K562 (cell line): ENCODE measurements at regions of chr11 and their contacts with region 1.

Region 1: DNA sequence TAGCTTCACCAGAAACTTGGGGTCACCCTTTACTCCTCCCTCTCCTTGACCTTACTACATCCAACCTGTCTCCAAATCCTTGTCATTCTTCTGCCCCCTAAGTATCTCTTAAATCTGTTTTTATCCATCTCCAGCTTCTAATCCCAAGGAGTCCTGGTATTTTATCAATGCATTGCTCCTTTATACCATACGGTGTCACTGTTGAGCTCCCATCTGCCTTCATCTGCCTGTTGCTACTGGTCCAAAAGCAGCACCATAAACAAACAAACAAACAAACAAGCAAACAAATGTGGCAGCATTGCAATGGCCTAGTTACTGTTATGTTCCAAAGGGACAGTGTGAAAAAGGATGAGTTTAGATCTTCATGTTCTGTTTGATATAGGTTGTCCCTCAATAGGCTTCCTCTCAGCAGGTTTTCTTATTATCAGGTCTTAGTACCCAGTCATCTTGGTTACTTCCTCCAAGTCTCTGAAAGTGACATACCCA is 34.2 kb downstream of the DNHD1 start:
- DNase-seq: peak; percentile 65 to 69 (median 67)
- ATAC-seq: peak; percentile 90
- H3K4me3 ChIP-seq: no peak overlapping the region
- H3K27ac ChIP-seq: no peak overlapping the region
- H3K4me1 ChIP-seq: no peaks in the 10 kb centered on the region; a peak in 1 of 5 replicates
- H3K27me3 ChIP-seq: no peaks in the 10 kb centered on the region
- CTCF ChIP-seq: peak; percentile 77 to 85 (median 80)
- EP300 ChIP-seq: no peak
- POLR2A ChIP-seq: no peak
- RAD21 ChIP-seq: peak; percentile 94 to 96

Region 2: GRCh38 chr11:6568191-6568918 is 37.0 kb after region 1 on chr11:
- CTCF ChIA-PET with region 1: no interaction called
- POLR2A ChIA-PET with region 1: interaction called, 3 read pairs
- in situ Hi-C with region 1: no loop called
- intact Hi-C with region 1: loop called (anchors 2 kb)
- DNase-seq: peak; percentile 83 to 94 (median 89)
- ATAC-seq: peak; percentile 88
- H3K4me3 ChIP-seq: no peak overlapping the region
- H3K27ac ChIP-seq: peak overlapping the region; percentile 61
- H3K4me1 ChIP-seq: peaks cover 41 to 54% of the 10 kb centered on the region in 2 experiments
- H3K27me3 ChIP-seq: no peaks in the 10 kb centered on the region
- CTCF ChIP-seq: peak; percentile 21 to 50 (median 36); a peak in 5 of 6 replicates
- EP300 ChIP-seq: peak; percentile 64; the same call in 1 of the 2 replicates
- POLR2A ChIP-seq: no peak
- RAD21 ChIP-seq: no peak

Region 3: DNA sequence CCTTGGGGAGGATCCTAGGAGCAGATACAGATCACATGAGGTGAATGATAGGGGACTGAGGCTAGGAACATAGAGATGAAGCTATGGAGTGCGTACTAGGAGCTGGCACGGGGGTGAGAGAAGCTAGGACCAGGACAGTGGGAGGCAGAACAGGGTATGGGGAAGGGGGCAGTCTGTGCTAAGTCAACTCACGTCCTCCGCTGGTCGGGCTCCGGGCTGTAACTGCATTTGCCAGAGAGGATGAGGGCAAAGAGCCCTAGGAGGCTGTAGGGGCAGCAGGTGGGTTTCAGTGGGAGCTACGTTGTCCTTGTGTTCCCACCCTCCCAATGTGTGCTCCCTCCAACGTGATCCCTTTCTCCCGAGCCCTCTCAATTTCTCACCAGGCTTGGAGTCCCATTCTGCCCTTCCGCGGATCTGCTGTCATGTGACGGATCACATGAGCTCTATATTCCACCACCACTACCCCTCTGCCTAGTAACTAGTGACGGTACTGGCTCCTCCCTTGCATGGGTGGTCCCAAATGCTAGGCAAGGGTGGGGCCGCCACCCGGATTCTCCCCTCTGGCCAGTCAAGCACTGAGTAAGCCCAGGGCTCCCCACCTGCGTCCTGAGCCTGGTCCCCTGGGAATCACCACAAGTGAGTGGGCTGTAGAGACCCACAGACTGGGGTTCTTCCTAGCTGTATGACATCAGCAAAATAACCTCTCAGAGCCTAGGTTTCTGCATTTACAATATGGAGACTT is 87.9 kb after region 1 on chr11 and contains the start of gene TPP1:
- CTCF ChIA-PET with region 1: no interaction called
- POLR2A ChIA-PET with region 1: interaction called, 4 read pairs
- in situ Hi-C with region 1: no loop called
- intact Hi-C with region 1: loop called (anchors 5 kb)
- DNase-seq: peak; percentile 92 to 97 (median 94)
- ATAC-seq: peak; percentile 97
- H3K4me3 ChIP-seq: peak within 1 kb of the TSS; percentile 71
- H3K27ac ChIP-seq: peak within 1 kb of the TSS; percentile 86
- H3K4me1 ChIP-seq: peaks cover 8 to 36% of the 10 kb centered on the region in 2 experiments
- H3K27me3 ChIP-seq: peaks cover 0 to 9% of the 10 kb centered on the region in 2 experiments; a peak in 1 of 5 replicates
- CTCF ChIP-seq: no peak
- EP300 ChIP-seq: no peak; the same call in 1 of the 2 replicates
- POLR2A ChIP-seq: peak; percentile 78
- RAD21 ChIP-seq: 0 out of 4 replicates have a peak, but pooled peaks of 1 of the 2 experiments have one; percentile 3
- polyA plus RNA-seq, gene TPP1: 9.4 to 15.7 TPM

Region 4: DNA sequence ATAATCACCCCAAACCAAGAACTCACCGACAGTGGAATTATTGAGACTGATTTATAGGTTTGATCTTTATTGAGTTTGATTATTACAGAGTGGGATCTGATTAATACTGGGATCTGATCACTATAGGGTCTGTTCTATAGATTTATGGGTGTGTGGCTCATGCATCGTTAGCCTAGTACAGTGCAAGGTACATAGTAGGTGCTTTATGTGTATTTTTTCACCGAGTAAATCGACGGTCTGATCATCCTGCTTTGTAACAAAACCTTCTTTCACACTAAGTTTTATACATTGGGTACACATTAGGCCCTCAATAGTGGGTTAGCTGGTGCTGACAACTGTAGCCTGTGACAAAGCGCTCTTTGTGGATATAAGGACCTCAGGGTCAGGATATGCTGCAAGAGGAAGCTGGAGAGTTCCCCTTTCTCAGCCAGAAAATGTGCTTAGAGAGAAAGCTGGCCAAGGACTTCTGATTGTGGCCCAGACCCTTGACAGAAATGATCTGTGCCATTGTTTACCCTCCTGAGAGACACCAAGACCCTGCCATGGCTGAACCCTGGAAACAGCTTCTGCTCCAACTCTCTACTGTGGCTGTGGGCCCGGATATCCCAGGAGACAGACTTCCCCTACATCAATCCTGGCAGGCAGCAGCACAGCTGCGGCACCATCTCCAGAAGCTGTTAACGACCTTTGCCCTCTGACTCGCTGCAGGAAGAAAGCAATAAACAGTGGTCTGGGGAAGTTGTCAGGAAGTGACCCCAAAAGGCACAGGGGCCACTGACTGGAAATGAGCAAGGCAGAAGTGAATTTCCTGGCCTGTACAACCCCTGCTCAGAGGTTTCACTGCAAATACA is 104.0 kb after region 1 on chr11:
- CTCF ChIA-PET with region 1: no interaction called
- POLR2A ChIA-PET with region 1: no interaction called
- in situ Hi-C with region 1: no loop called
- intact Hi-C with region 1: loop called (anchors 1 kb)
- DNase-seq: peak in 2 of 4 experiments; percentile 47 to 70
- ATAC-seq: peak; percentile 51
- H3K4me3 ChIP-seq: no peak overlapping the region
- H3K27ac ChIP-seq: peak overlapping the region; percentile 57
- H3K4me1 ChIP-seq: peaks cover 30% of the 10 kb centered on the region in 2 experiments
- H3K27me3 ChIP-seq: no peaks in the 10 kb centered on the region
- CTCF ChIP-seq: no peak
- EP300 ChIP-seq: peak; percentile 32; the same call in 1 of the 2 replicates
- POLR2A ChIP-seq: no peak
- RAD21 ChIP-seq: no peak

Region 5: DNA sequence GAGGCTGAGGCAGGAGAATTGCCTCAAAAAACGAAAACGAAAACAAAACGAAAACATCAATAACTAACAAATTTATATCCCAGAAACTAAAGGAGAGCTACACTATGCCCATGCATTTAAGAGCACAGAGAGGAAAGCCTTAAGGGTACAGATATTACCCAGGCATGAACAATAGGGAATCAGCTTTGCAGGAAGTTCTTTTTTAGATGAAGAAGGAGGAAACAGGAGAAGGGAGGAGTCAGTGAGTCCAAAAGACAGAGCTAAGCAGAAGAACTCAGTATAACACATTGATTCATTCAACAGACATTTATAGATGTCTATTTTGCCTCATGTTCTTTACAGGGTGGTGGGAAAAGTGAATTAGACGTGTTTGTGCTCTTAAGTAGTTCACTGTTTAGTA is 143.6 kb after region 1 on chr11:
- CTCF ChIA-PET with region 1: no interaction called
- POLR2A ChIA-PET with region 1: interaction called, 5 read pairs
- in situ Hi-C with region 1: loop called (anchors 10 kb)
- intact Hi-C with region 1: no loop called
- DNase-seq: no peak
- ATAC-seq: no peak
- H3K4me3 ChIP-seq: no peak overlapping the region
- H3K27ac ChIP-seq: no peak overlapping the region
- H3K4me1 ChIP-seq: peaks cover 0 to 19% of the 10 kb centered on the region in 2 experiments; a peak in 4 of 5 replicates
- H3K27me3 ChIP-seq: no peaks in the 10 kb centered on the region
- CTCF ChIP-seq: no peak
- EP300 ChIP-seq: no peak
- POLR2A ChIP-seq: no peak
- RAD21 ChIP-seq: no peak

Region 6: DNA sequence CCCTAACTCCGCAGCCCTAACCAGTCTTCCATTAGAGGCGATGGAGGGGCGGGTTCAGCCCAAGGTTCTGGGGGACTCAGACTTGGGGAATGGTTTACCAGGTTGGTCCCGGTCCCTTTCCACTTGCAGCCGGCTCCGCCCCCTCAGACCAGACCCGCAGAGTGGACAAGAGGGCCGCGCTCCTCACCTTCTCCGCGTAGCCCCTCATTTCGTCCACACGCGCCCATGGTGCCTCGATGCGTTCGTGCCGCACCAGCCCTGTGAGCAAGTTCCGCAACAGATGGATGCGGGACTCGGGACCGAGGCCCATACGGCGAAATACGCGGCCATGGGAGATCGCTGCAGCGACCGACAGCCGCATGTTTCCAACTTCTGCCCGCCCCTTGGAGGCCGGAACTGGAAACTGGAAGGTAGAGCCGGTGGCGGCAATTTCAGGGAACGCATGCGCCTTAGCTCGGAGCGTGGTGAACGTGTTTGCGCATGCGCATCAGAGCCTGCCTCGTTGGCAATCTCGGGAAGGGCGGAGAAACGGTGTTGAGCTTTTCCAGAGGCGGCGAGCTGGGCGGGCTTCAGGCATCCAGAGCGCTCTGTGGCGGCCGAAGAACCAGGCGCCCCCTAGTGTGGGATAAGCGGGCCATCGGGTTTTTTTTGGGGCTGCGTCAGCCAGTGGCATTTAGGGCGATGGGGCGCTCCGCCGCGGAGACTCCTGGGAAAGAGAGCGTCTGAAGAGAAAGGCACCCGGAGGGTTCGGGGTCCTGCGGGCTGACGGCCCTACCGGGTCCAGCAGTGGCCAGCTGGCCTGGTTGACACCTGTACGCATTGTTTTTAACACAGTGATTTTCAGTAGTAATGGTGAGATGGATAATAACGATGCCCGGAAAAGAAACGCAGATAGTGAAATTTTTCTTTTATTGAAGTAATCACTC is 151.9 kb after region 1 on chr11 and contains the start of gene MRPL17:
- CTCF ChIA-PET with region 1: interaction called, 4 read pairs
- POLR2A ChIA-PET with region 1: interaction called, 5 read pairs
- in situ Hi-C with region 1: loop called (anchors 10 kb)
- intact Hi-C with region 1: loop called (anchors 1 kb)
- DNase-seq: peak; percentile 96 to 99 (median 97)
- ATAC-seq: peak; percentile 94
- H3K4me3 ChIP-seq: peak within 1 kb of the TSS; percentile 68
- H3K27ac ChIP-seq: peak within 1 kb of the TSS; percentile 80
- H3K4me1 ChIP-seq: peaks cover 10 to 14% of the 10 kb centered on the region in 2 experiments; a peak in 4 of 5 replicates
- H3K27me3 ChIP-seq: no peaks in the 10 kb centered on the region
- CTCF ChIP-seq: peak; percentile 92 to 96 (median 93)
- EP300 ChIP-seq: peak; percentile 45; the same call in 1 of the 2 replicates
- POLR2A ChIP-seq: peak; percentile 99
- RAD21 ChIP-seq: peak; percentile 85 to 93
- polyA plus RNA-seq, gene MRPL17: 78.9 to 81.6 TPM

Region 7: DNA sequence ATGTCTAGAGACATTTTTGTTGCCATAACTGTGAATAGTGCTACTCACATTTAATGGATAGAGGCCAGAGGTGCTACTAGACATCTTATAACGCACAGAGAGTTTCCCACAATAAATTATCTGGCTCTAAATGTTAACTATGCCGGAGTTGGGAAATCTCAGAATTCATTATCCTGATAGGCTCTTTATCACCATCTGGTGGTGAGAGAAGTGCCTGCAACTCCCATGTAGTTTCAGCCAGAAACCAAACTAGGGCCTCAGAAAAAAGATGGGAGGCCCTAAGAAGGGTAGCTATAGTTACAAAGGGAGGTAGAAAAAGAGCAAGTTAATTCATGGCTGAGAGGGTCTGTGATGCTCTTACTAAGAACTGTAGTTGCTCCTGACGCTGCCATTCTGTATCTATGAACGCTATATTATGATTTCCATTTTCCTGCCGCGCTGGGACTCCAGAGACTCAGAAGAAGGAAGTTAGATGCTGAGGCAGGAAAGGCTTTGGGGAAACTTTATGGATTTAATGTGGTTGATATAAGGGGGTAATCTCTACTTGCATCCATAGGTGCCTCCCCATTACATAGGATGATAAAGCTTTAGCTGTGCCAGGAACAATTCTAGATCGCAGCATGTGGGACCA is 174.7 kb after region 1 on chr11:
- CTCF ChIA-PET with region 1: interaction called, 11 read pairs
- POLR2A ChIA-PET with region 1: interaction called, 3 read pairs
- in situ Hi-C with region 1: no loop called
- intact Hi-C with region 1: loop called (anchors 1 kb)
- DNase-seq: peak; percentile 54 to 64 (median 58)
- ATAC-seq: peak; percentile 78
- H3K4me3 ChIP-seq: no peak overlapping the region
- H3K27ac ChIP-seq: no peak overlapping the region
- H3K4me1 ChIP-seq: no peaks in the 10 kb centered on the region
- H3K27me3 ChIP-seq: no peaks in the 10 kb centered on the region
- CTCF ChIP-seq: peak; percentile 81 to 89 (median 81)
- EP300 ChIP-seq: no peak
- POLR2A ChIP-seq: no peak
- RAD21 ChIP-seq: peak; percentile 81 to 89